Tibial artery (tissue), 4 donors: ENCODE measurements at regions of chr15 and their contacts with region 1.

Region 1: GRCh38 chr15:42084460-42085235 is 9.7 kb downstream of the PLA2G4D start:
- DNase-seq: peak in 1 of 2 donors; percentile 71
- H3K4me3 ChIP-seq: no peak overlapping the region
- H3K27ac ChIP-seq: no peak overlapping the region
- H3K4me1 ChIP-seq: peaks cover 0 to 4% (median 0%) of the 10 kb centered on the region in 4 donors
- H3K27me3 ChIP-seq: peaks cover 0 to 65% of the 10 kb centered on the region in 2 donors
- CTCF ChIP-seq: peak; percentile 83 to 93

Region 2: DNA sequence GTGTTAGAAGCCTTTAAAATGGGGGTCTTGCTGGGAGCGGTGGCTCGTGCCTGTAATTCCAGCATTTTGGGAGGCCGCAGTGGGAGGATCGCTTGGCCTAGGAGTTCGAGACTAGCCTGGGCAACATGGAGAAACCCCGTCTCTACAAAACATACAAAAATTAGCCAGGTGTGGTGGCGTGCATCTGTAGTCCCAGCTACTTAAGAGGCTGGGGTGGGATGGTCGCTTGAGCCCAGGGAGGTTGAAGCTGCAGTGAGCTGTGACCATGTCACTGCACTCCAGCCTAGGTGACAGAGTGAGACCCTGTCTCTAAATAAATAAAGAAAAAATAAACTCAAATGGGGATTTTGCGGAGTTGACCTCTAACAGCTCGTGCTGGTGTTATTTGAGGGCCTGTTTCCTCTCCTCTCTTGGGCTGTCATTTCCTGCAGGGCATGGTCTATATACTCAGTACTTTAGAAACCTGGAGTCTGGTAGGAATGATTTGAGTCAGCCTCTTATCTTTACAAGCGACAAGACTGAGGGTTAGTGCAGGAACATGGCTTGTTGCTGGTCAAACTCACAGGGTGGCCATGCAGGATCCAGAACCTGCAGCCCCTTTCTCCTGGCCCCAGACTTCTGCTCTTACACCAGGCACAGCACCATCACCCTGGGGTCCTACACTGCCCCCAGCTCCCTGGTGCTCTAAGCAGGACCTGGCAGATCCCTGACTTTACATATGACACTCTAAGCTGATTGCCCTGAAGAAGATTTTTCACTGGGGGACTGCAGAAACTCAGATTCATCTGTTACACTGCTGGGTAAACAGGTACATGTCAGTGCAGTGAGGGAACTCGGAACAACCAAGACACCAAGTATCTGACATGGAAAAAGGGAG is 127.4 kb before region 1 on chr15:
- intact Hi-C with region 1: no loop called
- DNase-seq: no peak
- H3K4me3 ChIP-seq: no peak overlapping the region
- H3K27ac ChIP-seq: peak overlapping the region; percentile 44 to 63
- H3K4me1 ChIP-seq: peaks cover 0 to 64% (median 31%) of the 10 kb centered on the region in 4 donors
- H3K27me3 ChIP-seq: no peaks in the 10 kb centered on the region
- CTCF ChIP-seq: no peak

Region 3: DNA sequence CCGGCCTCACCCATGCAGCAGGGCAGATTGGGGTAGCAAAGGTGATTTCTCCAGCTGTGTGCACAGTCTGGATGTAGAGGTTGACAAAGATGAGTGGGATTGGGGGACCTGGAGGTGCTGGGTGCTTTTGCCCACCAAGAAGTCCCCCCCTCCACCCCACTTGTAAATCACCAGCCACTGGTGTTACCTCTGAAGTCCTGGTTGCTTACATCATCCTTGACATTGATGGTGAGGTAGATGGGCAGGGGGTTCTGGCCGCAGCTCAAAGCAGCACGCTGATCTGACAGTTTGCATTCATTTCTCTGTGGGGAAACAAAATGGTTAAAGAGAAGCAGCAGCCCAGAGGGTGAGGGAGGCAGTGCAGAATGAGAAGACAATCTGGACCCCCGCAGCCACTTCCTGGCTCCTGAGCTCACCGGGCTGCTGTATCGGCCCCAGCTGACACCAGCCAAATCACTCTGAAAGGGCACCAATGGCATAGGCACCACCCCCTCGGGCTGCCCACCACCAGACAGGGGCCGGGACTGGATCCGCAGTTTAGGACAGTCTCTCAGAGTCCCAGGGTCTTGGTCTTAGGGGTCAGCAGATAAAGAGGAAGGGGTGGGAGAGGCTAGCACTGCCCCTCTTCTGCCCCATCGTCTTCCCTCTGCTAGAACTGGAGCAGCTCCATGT is 94.6 kb before region 1 on chr15:
- intact Hi-C with region 1: loop called (anchors 2 kb)
- DNase-seq: no peak
- H3K4me3 ChIP-seq: no peak overlapping the region
- H3K27ac ChIP-seq: no peak overlapping the region
- H3K4me1 ChIP-seq: peaks cover 0 to 9% (median 4%) of the 10 kb centered on the region in 4 donors
- H3K27me3 ChIP-seq: no peaks in the 10 kb centered on the region
- CTCF ChIP-seq: no peak

Region 4: GRCh38 chr15:42955518-42955917 is 870.9 kb after region 1 on chr15:
- intact Hi-C with region 1: no loop called
- DNase-seq: no peak
- H3K4me3 ChIP-seq: no peak overlapping the region
- H3K27ac ChIP-seq: no peak overlapping the region
- H3K4me1 ChIP-seq: peaks cover 0 to 4% (median 0%) of the 10 kb centered on the region in 4 donors
- H3K27me3 ChIP-seq: no peaks in the 10 kb centered on the region
- CTCF ChIP-seq: no peak